T-cell (primary cell): ENCODE measurements at regions of chr16 and their contacts with region 1.

Region 1: GRCh38 chr16:74309789-74310781 is 13.5 kb downstream of the PSMD7 start:
- DNase-seq: peak in 4 of 35 experiments; percentile 9 to 63 (median 16)
- ATAC-seq: peak in 1 of 4 experiments; percentile 43
- H3K4me3 ChIP-seq: no peak overlapping the region
- H3K4me3 Mint-ChIP-seq: no peak overlapping the region
- H3K27ac ChIP-seq: no peak overlapping the region
- H3K27ac Mint-ChIP-seq: no peak overlapping the region
- H3K4me1 ChIP-seq: no peaks in the 10 kb centered on the region
- H3K4me1 Mint-ChIP-seq: peaks cover 0 to 4% (median 0%) of the 10 kb centered on the region in 3 donors
- H3K27me3 ChIP-seq: no peaks in the 10 kb centered on the region
- H3K27me3 Mint-ChIP-seq: no peaks in the 10 kb centered on the region

Region 2: DNA sequence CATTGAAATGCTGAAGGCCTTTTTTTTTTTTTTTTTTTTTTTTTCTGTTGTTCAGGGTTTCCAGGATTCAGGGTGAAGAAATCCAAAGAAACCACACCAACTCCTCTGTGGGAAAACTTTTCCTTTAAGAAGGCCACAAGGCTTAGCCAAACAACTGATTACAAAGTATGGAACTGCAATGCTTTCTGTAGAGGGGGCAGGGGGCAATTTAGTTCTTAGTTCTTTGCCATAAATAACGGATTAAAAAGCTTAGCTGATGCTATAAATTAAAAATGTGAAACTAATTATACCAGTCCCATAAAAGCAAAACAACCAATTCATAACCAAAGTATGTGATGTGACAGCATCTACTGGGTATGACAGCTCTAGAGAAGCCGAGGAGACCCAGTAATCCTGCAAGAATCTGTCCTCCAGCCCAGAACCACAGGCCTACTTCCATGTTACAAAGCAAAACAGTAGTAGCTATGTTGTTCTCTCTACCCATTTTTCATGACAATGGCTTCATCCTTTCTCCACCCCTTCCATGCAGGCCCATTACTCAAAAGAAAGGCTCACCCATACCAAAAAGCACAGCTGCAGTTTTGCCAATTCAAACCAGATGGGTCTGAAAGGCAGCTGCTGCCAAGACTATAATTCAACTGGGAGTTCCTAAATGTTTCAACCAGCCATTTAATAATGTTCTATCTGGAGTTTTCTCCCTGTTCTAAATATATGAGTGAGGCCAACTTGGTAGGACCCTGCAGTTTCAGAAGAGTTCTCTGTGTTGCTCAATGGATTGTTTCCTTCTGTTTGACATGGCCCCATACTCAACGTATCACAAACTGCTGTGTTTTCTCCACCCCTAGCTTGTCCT is 1095.0 kb before region 1 on chr16:
- CTCF ChIA-PET with region 1: no interaction called
- POLR2A ChIA-PET with region 1: interaction called in 1 of 2 experiments, 11 read pairs
- DNase-seq: no peak
- ATAC-seq: no peak
- H3K4me3 ChIP-seq: no peak overlapping the region
- H3K4me3 Mint-ChIP-seq: no peak overlapping the region
- H3K27ac ChIP-seq: no peak overlapping the region
- H3K27ac Mint-ChIP-seq: no peak overlapping the region
- H3K4me1 ChIP-seq: no peaks in the 10 kb centered on the region
- H3K4me1 Mint-ChIP-seq: no peaks in the 10 kb centered on the region
- H3K27me3 ChIP-seq: no peaks in the 10 kb centered on the region
- H3K27me3 Mint-ChIP-seq: no peaks in the 10 kb centered on the region

Region 3: DNA sequence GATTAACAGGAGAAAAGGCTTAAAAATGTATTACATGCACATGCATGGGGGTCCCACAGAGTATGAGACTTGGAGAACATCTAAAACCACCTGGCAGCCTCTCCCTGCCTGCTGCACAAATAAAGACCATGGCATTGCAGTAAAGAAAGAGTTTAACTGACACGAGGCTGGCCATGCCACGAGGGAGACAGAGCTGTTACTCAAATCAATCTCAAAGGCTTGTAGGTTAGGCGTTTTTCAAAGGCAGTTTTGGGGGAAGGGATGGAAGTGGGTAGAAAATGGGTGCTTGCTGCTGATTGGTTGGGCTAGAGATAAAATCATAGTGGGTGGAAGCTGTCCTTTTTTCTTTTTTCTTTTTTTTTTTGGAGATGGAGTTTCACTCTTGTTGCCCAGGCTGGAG is 30.8 kb before region 1 on chr16:
- CTCF ChIA-PET with region 1: interaction called, 3 to 10 read pairs
- POLR2A ChIA-PET with region 1: no interaction called
- DNase-seq: no peak
- ATAC-seq: no peak
- H3K4me3 ChIP-seq: no peak overlapping the region
- H3K4me3 Mint-ChIP-seq: no peak overlapping the region
- H3K27ac ChIP-seq: no peak overlapping the region
- H3K27ac Mint-ChIP-seq: no peak overlapping the region
- H3K4me1 ChIP-seq: no peaks in the 10 kb centered on the region
- H3K4me1 Mint-ChIP-seq: no peaks in the 10 kb centered on the region
- H3K27me3 ChIP-seq: peaks cover 0 to 4% of the 10 kb centered on the region in 2 experiments
- H3K27me3 Mint-ChIP-seq: peaks cover 11 to 17% of the 10 kb centered on the region in 2 donors

Region 4: GRCh38 chr16:74448992-74449434 is 138.9 kb after region 1 on chr16:
- CTCF ChIA-PET with region 1: no interaction called
- POLR2A ChIA-PET with region 1: no interaction called
- DNase-seq: no peak
- ATAC-seq: no peak
- H3K4me3 ChIP-seq: no peak overlapping the region
- H3K4me3 Mint-ChIP-seq: no peak overlapping the region
- H3K27ac ChIP-seq: no peak overlapping the region
- H3K27ac Mint-ChIP-seq: peak overlapping the region in 1 of 2 donors; percentile 6
- H3K4me1 ChIP-seq: no peaks in the 10 kb centered on the region
- H3K4me1 Mint-ChIP-seq: no peaks in the 10 kb centered on the region
- H3K27me3 ChIP-seq: no peaks in the 10 kb centered on the region
- H3K27me3 Mint-ChIP-seq: no peaks in the 10 kb centered on the region